Activated CD4-positive, alpha-beta memory T cell treated with anti-CD3 and anti-CD28 coated beads for 36 hours (primary cell): ENCODE measurements at regions of chr2 and their contacts with region 1.

Region 1: DNA sequence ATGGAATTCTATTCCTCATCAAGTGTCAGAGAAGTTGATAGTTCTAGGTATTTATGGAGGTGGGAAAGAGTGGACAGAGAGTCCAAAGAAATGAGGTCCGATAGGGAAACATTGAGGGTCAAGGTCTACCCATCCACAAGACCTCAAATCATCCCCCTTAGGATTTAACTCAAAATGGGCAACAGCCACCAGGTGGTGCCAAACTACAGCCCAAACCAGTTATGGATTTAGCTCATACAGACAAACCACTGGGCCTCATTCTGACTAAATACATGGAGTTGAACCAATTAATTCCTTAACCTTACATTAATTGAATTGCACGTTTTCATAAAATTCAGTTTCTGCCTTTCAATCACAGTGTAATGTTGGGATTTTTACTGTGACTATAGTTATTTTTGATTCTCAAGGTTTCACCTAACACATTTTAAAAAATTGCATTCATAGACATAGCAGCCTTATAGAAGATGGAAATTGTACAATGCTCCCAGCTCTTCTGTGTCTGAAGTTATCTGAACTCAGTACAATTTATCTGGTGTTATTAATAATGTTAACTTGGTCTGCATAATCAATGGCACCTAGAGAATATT is 98.2 kb upstream of the HNMT start:
- DNase-seq: peak; percentile 65
- H3K4me3 Mint-ChIP-seq: no peak overlapping the region
- H3K27ac Mint-ChIP-seq: no peak overlapping the region
- H3K4me1 Mint-ChIP-seq: no peaks in the 10 kb centered on the region
- H3K27me3 Mint-ChIP-seq: peaks cover 2% of the 10 kb centered on the region

Region 2: DNA sequence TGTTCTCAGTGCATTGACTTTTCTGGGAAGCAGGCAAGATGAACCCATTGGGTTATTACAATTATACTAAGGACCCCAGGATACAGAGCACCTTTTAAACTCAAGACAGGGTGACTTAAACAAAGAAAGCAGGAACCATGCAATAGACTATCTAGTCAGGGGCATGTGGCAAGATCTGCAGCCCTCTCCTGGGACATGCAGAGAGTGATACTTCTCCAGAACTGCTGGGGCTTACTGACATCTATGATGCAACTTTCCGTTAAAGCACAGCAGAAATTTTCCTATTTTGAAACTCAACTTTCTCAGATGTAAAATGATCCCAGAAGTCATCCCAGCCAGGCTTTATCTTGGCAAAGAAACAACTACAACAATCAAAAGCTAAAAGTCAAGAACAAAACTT is 64.0 kb before region 1 on chr2:
- CTCF ChIA-PET with region 1: no interaction called
- POLR2A ChIA-PET with region 1: no interaction called
- intact Hi-C with region 1: no loop called
- DNase-seq: no peak
- H3K4me3 Mint-ChIP-seq: no peak overlapping the region
- H3K27ac Mint-ChIP-seq: no peak overlapping the region
- H3K4me1 Mint-ChIP-seq: no peaks in the 10 kb centered on the region
- H3K27me3 Mint-ChIP-seq: peaks cover 3% of the 10 kb centered on the region

Region 3: GRCh38 chr2:138373993-138374408 is 508.0 kb after region 1 on chr2:
- CTCF ChIA-PET with region 1: interaction called, 3 read pairs
- POLR2A ChIA-PET with region 1: no interaction called
- intact Hi-C with region 1: loop called (anchors 5 kb)
- DNase-seq: no peak
- H3K4me3 Mint-ChIP-seq: no peak overlapping the region
- H3K27ac Mint-ChIP-seq: no peak overlapping the region
- H3K4me1 Mint-ChIP-seq: no peaks in the 10 kb centered on the region
- H3K27me3 Mint-ChIP-seq: peaks cover under 1% of the 10 kb centered on the region